ENCODE measurements at regions of chr17 and their contacts with region 1.

Region 1: GRCh38 chr17:40203131-40203530 is 16.0 kb upstream of the WIPF2 start:
- DNase-seq: no peak
- H3K4me3 Mint-ChIP-seq: no peak overlapping the region
- H3K27ac Mint-ChIP-seq: no peak overlapping the region
- H3K4me1 Mint-ChIP-seq: peaks cover 7% of the 10 kb centered on the region
- H3K27me3 Mint-ChIP-seq: no peaks in the 10 kb centered on the region
- CTCF ChIP-seq: no peak

Region 2: GRCh38 chr17:39814497-39814896 is 388.6 kb before region 1 on chr17:
- CTCF ChIA-PET with region 1: no interaction called
- intact Hi-C with region 1: no loop called
- DNase-seq: peak; percentile 61
- H3K4me3 Mint-ChIP-seq: no peak overlapping the region
- H3K27ac Mint-ChIP-seq: no peak overlapping the region
- H3K4me1 Mint-ChIP-seq: peaks cover 10% of the 10 kb centered on the region
- H3K27me3 Mint-ChIP-seq: no peaks in the 10 kb centered on the region
- CTCF ChIP-seq: no peak

Region 3: DNA sequence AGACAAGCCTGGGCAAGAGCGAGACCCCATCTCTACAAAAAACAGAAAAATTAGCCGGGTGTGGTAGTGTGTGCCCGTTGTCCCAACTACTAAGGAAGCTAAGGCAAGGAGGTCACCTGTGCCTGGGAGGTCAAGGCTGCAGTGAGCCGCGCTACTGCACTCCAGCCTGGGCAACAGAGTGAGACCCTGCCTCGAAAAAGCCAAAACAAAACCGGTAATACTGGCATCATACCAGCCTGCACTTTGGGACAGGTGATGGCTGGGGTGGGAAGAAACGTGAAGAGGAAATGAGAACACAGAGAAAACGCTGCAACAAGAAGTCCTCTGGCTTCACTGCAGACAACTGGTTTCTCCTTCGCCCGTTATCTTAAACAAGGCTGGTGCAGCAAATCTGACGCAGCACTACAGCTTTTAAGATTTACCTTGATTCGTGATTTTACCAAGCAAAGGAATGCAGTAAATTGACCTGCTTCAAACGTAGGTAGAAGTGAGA is 63.5 kb before region 1 on chr17:
- CTCF ChIA-PET with region 1: interaction called, 10 read pairs
- intact Hi-C with region 1: no loop called
- DNase-seq: peak; percentile 72
- H3K4me3 Mint-ChIP-seq: peak overlapping the region; percentile 98
- H3K27ac Mint-ChIP-seq: peak overlapping the region; percentile 98
- H3K4me1 Mint-ChIP-seq: peaks cover 45% of the 10 kb centered on the region
- H3K27me3 Mint-ChIP-seq: no peaks in the 10 kb centered on the region
- CTCF ChIP-seq: no peak

Region 4: DNA sequence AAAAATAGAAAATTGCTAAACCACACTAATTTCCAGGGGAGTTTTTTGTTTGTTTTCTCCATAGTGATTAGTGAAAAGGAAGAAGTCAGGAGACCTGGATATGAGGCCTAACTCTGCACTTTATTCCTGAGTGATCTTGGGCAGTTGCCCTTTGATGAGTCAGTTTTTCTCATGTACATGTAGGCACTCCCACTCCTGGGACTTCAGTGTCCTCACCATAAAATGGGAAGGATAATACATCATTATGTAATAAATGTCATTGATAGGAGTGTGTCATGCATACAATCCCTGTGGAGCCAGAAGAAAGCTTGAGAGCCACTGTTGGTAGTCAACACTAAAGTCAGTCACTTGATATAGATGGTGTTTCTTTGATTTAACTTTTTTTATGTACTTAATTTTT is 48.4 kb after region 1 on chr17:
- CTCF ChIA-PET with region 1: interaction called, 10 read pairs
- intact Hi-C with region 1: no loop called
- DNase-seq: no peak
- H3K4me3 Mint-ChIP-seq: no peak overlapping the region
- H3K27ac Mint-ChIP-seq: peak overlapping the region; percentile 10
- H3K4me1 Mint-ChIP-seq: peaks cover 30% of the 10 kb centered on the region
- H3K27me3 Mint-ChIP-seq: no peaks in the 10 kb centered on the region
- CTCF ChIP-seq: no peak

Region 5: DNA sequence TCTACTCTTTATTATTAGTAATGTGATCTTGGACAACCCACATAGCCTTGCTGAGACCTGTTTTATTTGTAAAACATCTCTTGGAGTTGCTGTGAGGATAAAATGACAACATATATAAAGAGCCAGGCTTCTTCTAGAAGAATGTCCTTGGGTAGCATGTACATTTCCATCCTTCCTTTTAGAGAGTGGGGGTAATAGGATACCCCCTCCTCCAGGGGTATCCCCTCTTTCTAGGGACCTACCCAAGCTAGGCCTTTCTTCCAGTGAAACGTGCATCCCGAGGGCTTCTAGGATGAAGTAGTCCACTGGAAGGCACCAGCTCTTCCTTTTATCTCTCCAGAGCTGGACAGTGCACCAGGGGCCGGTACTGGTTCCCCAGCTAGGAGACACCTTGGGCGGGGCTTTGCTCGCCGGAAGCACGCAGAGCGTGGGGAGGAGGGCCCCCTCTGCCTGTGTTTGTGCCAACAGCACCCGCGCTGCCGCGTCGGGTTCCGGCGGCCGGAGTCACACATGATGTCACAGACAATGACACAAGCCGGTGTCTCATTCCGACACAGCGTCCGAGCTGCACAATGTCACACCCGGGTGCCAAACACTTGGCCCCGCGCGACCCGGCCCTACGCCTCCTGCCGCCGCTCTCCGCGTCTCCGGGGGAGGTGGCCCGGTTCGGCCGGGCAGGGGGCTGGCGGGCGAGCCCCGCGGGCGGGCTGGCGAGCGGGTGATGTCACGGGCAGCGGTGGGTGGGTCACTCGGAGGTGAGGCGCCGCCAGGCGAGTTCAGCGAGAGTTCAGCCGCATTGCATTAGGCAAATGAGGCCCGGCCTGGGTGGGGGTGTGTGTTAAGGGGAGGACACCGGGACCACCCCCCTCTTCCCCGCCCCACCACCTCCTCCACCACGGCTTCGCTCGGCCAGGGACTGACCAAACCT is 138.0 kb after region 1 on chr17:
- CTCF ChIA-PET with region 1: interaction called, 10 read pairs
- intact Hi-C with region 1: no loop called
- DNase-seq: peak; percentile 100
- H3K4me3 Mint-ChIP-seq: peak overlapping the region; percentile 89
- H3K27ac Mint-ChIP-seq: peak overlapping the region; percentile 75
- H3K4me1 Mint-ChIP-seq: peaks cover 57% of the 10 kb centered on the region
- H3K27me3 Mint-ChIP-seq: no peaks in the 10 kb centered on the region
- CTCF ChIP-seq: peak; percentile 92

Region 6: DNA sequence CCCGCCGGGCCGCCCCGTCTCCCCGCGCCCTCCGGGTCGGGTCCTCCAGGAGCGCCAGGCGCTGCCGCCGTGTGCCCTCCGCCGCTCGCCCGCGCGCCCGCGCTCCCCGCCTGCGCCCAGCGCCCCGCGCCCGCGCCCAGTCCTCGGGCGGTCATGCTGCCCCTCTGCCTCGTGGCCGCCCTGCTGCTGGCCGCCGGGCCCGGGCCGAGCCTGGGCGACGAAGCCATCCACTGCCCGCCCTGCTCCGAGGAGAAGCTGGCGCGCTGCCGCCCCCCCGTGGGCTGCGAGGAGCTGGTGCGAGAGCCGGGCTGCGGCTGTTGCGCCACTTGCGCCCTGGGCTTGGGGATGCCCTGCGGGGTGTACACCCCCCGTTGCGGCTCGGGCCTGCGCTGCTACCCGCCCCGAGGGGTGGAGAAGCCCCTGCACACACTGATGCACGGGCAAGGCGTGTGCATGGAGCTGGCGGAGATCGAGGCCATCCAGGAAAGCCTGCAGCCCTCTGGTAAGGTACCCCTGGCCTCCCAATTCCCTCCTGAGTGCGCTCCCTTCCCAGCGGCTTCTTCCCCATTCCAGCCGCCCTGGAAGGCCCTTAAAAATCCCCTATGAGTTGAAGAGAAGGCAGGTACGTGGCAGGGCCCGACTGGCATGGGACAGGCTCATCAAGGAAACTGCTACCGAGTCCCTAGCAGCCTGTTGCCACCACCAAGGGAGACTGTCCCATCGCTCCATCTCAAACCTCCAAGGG is 240.6 kb after region 1 on chr17:
- CTCF ChIA-PET with region 1: interaction called, 17 read pairs
- intact Hi-C with region 1: loop called (anchors 1 kb)
- DNase-seq: peak; percentile 100
- H3K4me3 Mint-ChIP-seq: peak overlapping the region; percentile 1
- H3K27ac Mint-ChIP-seq: no peak overlapping the region
- H3K4me1 Mint-ChIP-seq: peaks cover 35% of the 10 kb centered on the region
- H3K27me3 Mint-ChIP-seq: peaks cover 37% of the 10 kb centered on the region
- CTCF ChIP-seq: no peak

Measured in Calu3 (cell line).